Ovary (tissue), 10 donors: ENCODE measurements at regions of chr10 and their contacts with region 1.

Region 1: DNA sequence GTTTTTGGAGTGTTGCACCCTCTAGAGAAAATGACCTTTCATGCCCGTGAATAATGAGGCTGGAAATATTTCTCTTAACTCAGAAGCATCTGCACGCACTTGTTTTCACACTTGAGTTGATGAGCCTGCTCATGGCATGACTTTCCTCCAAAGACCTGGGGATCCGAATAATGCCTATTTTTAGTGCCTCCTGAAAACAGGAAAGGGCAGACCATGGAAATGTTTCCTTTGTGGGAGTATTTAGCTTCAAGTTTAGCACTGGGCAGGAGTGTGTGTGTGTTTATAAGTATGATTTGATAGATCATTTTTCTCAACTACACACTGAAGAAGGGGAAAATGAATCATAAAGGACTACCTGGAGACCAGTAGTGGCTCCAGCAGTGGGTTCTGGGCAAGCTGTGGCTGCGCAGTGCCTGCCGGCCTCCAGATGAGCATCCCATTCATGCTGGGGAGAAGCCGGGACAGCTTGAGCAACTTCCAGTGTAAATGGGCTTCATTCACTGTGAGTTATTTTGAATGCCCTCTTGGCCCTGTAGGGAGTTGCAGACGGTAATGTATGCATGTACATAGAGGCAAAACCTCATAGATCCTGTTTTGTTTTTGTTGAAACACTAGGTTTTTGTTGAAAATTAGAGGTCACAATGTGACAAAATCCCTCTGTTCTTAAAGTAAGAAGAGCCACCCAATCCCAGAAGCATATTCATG is 117.8 kb upstream of the INSYN2A start:
- DNase-seq: no peak
- H3K4me3 ChIP-seq: no peak overlapping the region
- H3K27ac ChIP-seq: no peak overlapping the region
- H3K4me1 ChIP-seq: no peaks in the 10 kb centered on the region
- H3K27me3 ChIP-seq: no peaks in the 10 kb centered on the region
- CTCF ChIP-seq: no peak
- EP300 ChIP-seq: no peak
- POLR2A ChIP-seq: no peak

Region 2: GRCh38 chr10:126798649-126799048 is 515.5 kb before region 1 on chr10:
- intact Hi-C with region 1: loop called in 1 of 4 experiments (anchors 5 kb)
- DNase-seq: no peak
- H3K4me3 ChIP-seq: no peak overlapping the region
- H3K27ac ChIP-seq: no peak overlapping the region
- H3K4me1 ChIP-seq: no peaks in the 10 kb centered on the region
- H3K27me3 ChIP-seq: no peaks in the 10 kb centered on the region
- CTCF ChIP-seq: no peak
- EP300 ChIP-seq: no peak
- POLR2A ChIP-seq: no peak

Region 3: DNA sequence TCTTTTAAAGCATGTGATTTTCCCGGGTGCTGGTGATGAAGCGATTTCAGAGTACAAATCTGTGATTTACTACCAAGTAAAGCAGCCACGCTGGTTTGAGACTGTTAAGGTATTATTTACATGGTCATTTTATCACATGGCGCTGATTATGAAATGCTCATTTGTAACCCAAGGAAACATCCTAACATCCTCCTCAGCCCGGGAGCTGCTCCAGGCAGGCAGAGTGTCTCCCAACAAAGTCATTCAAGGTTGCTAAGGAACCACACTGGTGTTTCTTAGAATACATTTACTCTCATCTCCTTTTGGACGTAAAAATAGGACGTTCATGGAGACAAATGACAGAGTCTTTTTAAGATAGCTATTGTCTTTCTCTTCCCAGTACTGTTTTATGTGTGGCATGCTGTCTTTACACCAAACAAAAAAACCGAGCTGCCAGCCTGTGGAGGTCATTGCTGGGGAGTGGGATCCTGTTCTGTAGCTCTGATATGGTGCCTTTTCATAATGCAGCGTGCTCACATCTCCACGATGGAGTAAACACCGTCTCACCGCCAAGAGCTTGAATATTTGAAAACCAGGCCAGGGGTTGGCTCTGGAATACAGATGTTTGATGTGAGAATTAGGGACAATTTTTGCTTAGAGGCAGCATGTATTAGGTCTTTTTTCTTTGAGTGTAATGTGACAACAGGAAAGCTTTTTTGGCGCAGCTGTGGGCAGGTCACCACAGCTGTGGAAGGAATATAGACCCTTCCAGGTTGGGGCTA is 289.3 kb before region 1 on chr10:
- intact Hi-C with region 1: no loop called
- DNase-seq: peak in 4 of 5 donors; percentile 22 to 57 (median 46)
- H3K4me3 ChIP-seq: no peak overlapping the region
- H3K27ac ChIP-seq: no peak overlapping the region
- H3K4me1 ChIP-seq: no peaks in the 10 kb centered on the region
- H3K27me3 ChIP-seq: no peaks in the 10 kb centered on the region
- CTCF ChIP-seq: no peak
- EP300 ChIP-seq: no peak
- POLR2A ChIP-seq: no peak